ENCODE measurements at regions of chr17 and their contacts with region 1.

Region 1: DNA sequence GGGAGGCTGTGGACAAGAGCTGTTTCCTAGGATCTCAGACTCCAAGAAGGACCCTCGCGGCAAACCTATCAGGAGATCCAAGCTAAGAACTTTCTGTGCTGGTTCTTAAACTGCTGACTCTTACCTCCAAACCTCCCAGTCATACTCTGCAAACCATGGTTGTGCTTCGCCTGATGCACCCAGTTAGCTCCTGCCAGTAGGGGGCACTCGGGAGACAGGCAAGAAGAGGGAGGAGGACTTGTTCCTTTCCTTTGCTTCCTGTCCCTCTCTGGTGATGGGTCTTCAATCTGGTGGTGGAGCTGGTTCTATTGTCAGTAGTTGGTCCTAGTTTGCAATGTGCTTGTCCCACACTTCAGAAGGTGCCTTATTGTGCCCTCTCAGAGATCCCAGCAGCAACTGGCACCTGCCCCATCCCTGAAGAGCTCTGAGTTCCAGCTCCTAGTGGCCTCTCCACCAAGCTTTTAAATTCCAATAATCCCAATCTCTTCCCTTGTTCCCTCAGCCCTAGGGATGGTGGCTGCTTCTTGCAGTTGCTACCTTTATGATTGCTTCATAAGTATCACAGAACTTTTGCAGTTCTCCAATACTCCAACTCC is 113.5 kb upstream of the RPL38 start:
- DNase-seq: no peak
- ATAC-seq: no peak
- H3K4me3 ChIP-seq: no peak overlapping the region
- H3K27ac ChIP-seq: no peak overlapping the region
- H3K4me1 ChIP-seq: no peaks in the 10 kb centered on the region
- H3K27me3 ChIP-seq: peaks cover 0 to 33% (median 12%) of the 10 kb centered on the region in 7 donors
- CTCF ChIP-seq: peak in 5 of 9 donors; percentile 10 to 64 (median 32)

Region 2: GRCh38 chr17:74024871-74025531 is 65.0 kb before region 1 on chr17:
- intact Hi-C with region 1: loop called in 1 of 10 experiments (anchors 10 kb)
- DNase-seq: no peak
- ATAC-seq: no peak
- H3K4me3 ChIP-seq: no peak overlapping the region
- H3K27ac ChIP-seq: no peak overlapping the region
- H3K4me1 ChIP-seq: no peaks in the 10 kb centered on the region
- H3K27me3 ChIP-seq: peaks cover 0 to 37% (median 20%) of the 10 kb centered on the region in 7 donors
- CTCF ChIP-seq: no peak